Prostate gland (tissue), 2 donors: ENCODE measurements at regions of chr1 and their contacts with region 1.

Region 1: DNA sequence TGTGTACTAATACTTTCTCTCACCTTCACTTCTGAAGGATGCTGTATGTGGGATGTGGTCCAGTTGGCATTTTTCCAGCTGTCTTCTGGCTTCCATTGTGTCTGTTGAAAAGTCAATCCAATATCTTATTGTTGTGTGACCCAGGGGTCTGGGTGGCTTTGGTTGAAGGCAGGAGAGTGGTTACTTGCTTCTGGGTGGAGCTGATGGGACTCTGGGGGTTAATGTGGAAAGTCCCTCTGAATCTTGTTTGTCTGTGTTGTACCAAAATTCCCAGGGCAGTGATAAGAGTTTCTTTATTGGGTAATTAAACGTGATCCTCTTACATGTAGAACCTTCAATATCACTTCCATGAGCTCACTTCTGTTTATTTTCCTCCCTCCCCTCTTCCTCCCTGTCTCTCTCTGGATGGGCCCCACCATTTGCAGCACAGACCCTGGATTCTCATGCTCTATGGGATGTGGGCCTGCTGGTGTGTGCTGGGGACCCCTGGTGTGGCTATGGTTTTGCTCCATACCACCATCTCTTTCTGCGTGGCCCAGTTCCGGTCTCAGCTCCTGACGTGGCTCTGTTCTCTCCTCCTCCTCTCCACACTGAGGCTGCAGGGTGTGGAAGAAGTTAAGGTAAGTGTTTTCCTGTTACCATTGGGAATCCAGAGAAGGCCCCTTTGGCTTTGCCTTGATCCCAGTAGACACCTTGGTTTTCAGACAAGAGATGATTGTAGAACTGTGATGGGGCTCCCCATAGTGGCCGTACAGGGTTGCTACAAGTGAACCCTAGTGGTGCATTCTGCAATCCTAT is 71.5 kb downstream of the HHAT start:
- DNase-seq: peak; percentile 54
- H3K4me3 ChIP-seq: no peak overlapping the region
- H3K27ac ChIP-seq: no peak overlapping the region
- H3K4me1 ChIP-seq: no peaks in the 10 kb centered on the region
- H3K27me3 ChIP-seq: no peaks in the 10 kb centered on the region
- CTCF ChIP-seq: peak; percentile 46 to 90 (median 76)
- POLR2A ChIP-seq: no peak

Region 2: GRCh38 chr1:210362526-210362925 is 37.7 kb before region 1 on chr1:
- intact Hi-C with region 1: loop called (anchors 2 kb)
- DNase-seq: no peak
- H3K4me3 ChIP-seq: no peak overlapping the region
- H3K27ac ChIP-seq: peak overlapping the region in 1 of 2 donors; percentile 34
- H3K4me1 ChIP-seq: peaks cover 3% of the 10 kb centered on the region
- H3K27me3 ChIP-seq: no peaks in the 10 kb centered on the region
- CTCF ChIP-seq: no peak
- POLR2A ChIP-seq: no peak

Region 3: GRCh38 chr1:210516696-210517459 is 116.6 kb after region 1 on chr1:
- intact Hi-C with region 1: no loop called
- DNase-seq: no peak
- H3K4me3 ChIP-seq: no peak overlapping the region
- H3K27ac ChIP-seq: no peak overlapping the region
- H3K4me1 ChIP-seq: no peaks in the 10 kb centered on the region
- H3K27me3 ChIP-seq: no peaks in the 10 kb centered on the region
- CTCF ChIP-seq: no peak
- POLR2A ChIP-seq: no peak